WTC11 (cell line): ENCODE measurements at regions of chr1 and their contacts with region 1.

Region 1: DNA sequence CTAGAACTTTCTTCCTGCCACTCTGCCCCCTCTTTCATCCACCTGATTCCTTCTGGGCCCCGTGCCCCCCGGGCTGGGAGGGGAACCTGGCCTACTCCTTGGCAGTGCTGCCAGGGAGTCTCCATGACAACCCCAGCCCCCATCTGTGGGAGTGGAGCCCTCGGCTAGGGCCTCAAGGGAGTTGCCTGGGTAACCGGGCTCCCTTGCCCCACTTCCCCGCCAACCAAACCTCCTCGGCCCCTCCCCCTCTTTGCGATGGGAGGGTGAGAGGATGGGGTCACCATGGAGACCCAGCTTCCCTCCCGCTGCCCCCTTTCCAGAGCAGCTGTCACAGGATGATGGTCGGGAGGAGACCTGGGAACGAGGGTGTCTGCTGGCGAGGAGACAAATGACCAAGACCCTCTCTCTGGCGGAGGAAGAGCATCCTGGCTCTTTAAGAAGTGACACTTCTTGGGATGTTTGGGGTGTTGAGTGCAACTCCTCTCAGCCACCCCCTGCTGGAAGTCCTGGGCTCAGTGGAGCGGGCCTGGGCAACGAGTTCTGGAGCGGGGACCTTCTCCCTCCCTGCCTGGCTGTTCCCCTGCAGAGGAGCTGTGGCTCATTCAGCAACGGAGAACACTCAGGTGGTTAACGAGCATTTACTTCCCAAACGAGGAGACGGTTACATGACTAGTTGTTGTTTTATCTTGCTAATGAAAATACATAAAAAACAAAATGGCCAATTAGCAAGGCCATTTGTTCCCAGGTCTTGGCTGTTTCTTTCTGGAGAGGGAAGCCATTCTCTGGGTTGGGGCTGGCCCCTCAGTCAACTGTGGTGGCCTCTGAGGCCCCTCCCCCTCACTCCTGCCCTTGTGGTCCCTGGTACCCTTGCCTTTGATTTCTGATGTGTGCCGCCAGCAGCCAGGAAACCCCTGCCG is 82.8 kb downstream of the UBIAD1 start:
- DNase-seq: peak; percentile 63
- ATAC-seq: peak; percentile 82
- H3K4me3 Mint-ChIP-seq: peak overlapping the region; percentile 62
- H3K27ac Mint-ChIP-seq: peak overlapping the region; percentile 91
- H3K4me1 Mint-ChIP-seq: peaks cover 69% of the 10 kb centered on the region
- H3K27me3 Mint-ChIP-seq: peaks cover 64% of the 10 kb centered on the region
- CTCF ChIP-seq: no peak

Region 2: GRCh38 chr1:11335417-11336056 is 20.3 kb before region 1 on chr1:
- CTCF ChIA-PET with region 1: interaction called, 17 read pairs
- POLR2A ChIA-PET with region 1: no interaction called
- DNase-seq: no peak
- ATAC-seq: no peak
- H3K4me3 Mint-ChIP-seq: no peak overlapping the region
- H3K27ac Mint-ChIP-seq: 0 out of 2 replicates have a peak overlapping the region, but pooled peaks have one; percentile 60
- H3K4me1 Mint-ChIP-seq: peaks cover 41% of the 10 kb centered on the region
- H3K27me3 Mint-ChIP-seq: peaks cover 5% of the 10 kb centered on the region; the same call in 1 of the 2 replicates
- CTCF ChIP-seq: no peak